Naive thymus-derived CD4-positive, alpha-beta T cell (primary cell): ENCODE measurements at regions of chr7 and their contacts with region 1.

Region 1: GRCh38 chr7:44847508-44847920 is 373 bp downstream of the H2AZ2 start:
- DNase-seq: peak in 8 of 9 donors; percentile 84 to 94 (median 91)
- ATAC-seq: peak; percentile 68
- H3K4me3 ChIP-seq: peak overlapping the region; percentile 91
- H3K4me3 Mint-ChIP-seq: peak overlapping the region; percentile 89 to 99 (median 94)
- H3K27ac ChIP-seq: peak overlapping the region; percentile 96
- H3K27ac Mint-ChIP-seq: peak overlapping the region; percentile 95 to 100 (median 98)
- H3K4me1 ChIP-seq: peaks cover 0 to 11% of the 10 kb centered on the region in 2 donors
- H3K4me1 Mint-ChIP-seq: peaks cover 21 to 58% (median 33%) of the 10 kb centered on the region in 7 donors
- H3K27me3 ChIP-seq: no peaks in the 10 kb centered on the region
- H3K27me3 Mint-ChIP-seq: peaks cover 0 to 2% (median 0%) of the 10 kb centered on the region in 5 donors

Region 2: GRCh38 chr7:44123190-44124003 is 724.1 kb before region 1 on chr7 and contains the start of gene POLD2:
- CTCF ChIA-PET with region 1: no interaction called
- POLR2A ChIA-PET with region 1: no interaction called
- intact Hi-C with region 1: loop called in 1 of 2 experiments (anchors 1 kb)
- DNase-seq: peak; percentile 88 to 99 (median 94)
- ATAC-seq: peak; percentile 99
- H3K4me3 ChIP-seq: peak within 1 kb of the TSS; percentile 89
- H3K4me3 Mint-ChIP-seq: peak within 1 kb of the TSS; percentile 82 to 97 (median 93)
- H3K27ac ChIP-seq: peak within 1 kb of the TSS; percentile 74
- H3K27ac Mint-ChIP-seq: peak within 1 kb of the TSS; percentile 40 to 96 (median 87)
- H3K4me1 ChIP-seq: peaks cover 8 to 9% of the 10 kb centered on the region in 2 donors
- H3K4me1 Mint-ChIP-seq: peaks cover 18 to 40% (median 39%) of the 10 kb centered on the region in 7 donors
- H3K27me3 ChIP-seq: no peaks in the 10 kb centered on the region
- H3K27me3 Mint-ChIP-seq: peaks cover 0 to 23% (median 0%) of the 10 kb centered on the region in 5 donors
- total RNA-seq, gene POLD2: 55.1 to 118 (median 69.2) TPM

Region 3: DNA sequence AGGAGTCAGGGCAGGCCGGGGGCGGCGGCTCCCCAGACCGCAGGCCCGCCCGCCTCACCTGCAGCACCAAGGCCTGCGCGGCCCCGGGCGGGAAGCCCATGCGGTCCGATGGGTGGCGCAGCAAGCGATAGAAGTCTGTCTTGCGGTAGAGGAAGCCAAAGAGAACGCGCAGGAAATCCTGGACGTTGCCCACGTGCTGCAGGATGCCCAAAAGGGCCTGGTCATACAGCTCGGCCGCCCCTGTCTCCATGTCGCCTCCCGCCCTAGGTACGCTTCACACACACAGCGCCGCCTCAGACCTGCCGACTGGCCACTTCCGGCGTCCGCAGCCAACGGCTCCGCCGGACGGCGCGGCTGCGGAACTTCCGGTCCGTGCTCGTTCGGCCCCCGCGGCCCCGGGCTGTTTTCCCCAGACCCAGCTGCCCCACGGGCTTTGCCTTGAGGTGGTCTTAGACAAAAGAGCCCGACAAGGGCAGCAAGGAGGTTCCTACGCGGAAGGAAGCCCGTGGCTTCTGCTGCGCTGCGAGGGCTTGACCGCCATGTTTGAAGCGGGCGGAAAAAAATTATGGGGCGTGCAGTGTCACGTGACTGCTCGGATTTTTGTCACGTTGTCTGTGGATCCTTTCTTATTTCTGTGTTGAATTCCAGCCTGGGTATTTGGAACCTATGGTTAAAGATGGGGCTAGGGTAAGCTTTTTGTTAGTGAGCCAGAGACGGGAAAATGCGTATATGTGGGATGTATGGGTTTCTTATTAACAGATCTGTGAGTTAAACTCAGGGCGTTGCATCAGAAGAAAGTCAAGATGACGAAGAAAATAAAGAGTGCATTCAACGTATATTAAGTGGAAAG is 356.9 kb before region 1 on chr7 and contains the start of gene NUDCD3:
- CTCF ChIA-PET with region 1: no interaction called
- POLR2A ChIA-PET with region 1: interaction called, 8 read pairs
- intact Hi-C with region 1: loop called (anchors 1 to 5 kb)
- DNase-seq: peak; percentile 63 to 88 (median 84)
- ATAC-seq: peak; percentile 84
- H3K4me3 ChIP-seq: peak within 1 kb of the TSS; percentile 92
- H3K4me3 Mint-ChIP-seq: peak within 1 kb of the TSS; percentile 85 to 96 (median 90)
- H3K27ac ChIP-seq: peak within 1 kb of the TSS; percentile 98
- H3K27ac Mint-ChIP-seq: peak within 1 kb of the TSS; percentile 90 to 97 (median 93)
- H3K4me1 ChIP-seq: peaks cover 28 to 30% of the 10 kb centered on the region in 2 donors
- H3K4me1 Mint-ChIP-seq: peaks cover 36 to 53% (median 48%) of the 10 kb centered on the region in 7 donors
- H3K27me3 ChIP-seq: peaks cover 0 to 3% of the 10 kb centered on the region in 2 donors
- H3K27me3 Mint-ChIP-seq: peaks cover 0 to 11% (median 3%) of the 10 kb centered on the region in 5 donors
- total RNA-seq, gene NUDCD3: 79.4 to 117 (median 91.0) TPM

Region 4: GRCh38 chr7:44606450-44607254 is 240.9 kb before region 1 on chr7 and contains the start of gene OGDH:
- CTCF ChIA-PET with region 1: interaction called, 3 read pairs
- POLR2A ChIA-PET with region 1: interaction called, 36 read pairs
- intact Hi-C with region 1: loop called (anchors 1 kb)
- DNase-seq: peak; percentile 99 to 100 (median 100)
- ATAC-seq: peak; percentile 95
- H3K4me3 ChIP-seq: peak within 1 kb of the TSS; percentile 71
- H3K4me3 Mint-ChIP-seq: peak within 1 kb of the TSS; percentile 81 to 99 (median 98)
- H3K27ac ChIP-seq: peak within 1 kb of the TSS; percentile 93
- H3K27ac Mint-ChIP-seq: peak within 1 kb of the TSS; percentile 93 to 100 (median 98)
- H3K4me1 ChIP-seq: peaks cover 13 to 17% of the 10 kb centered on the region in 2 donors
- H3K4me1 Mint-ChIP-seq: peaks cover 0 to 45% (median 37%) of the 10 kb centered on the region in 7 donors
- H3K27me3 ChIP-seq: no peaks in the 10 kb centered on the region
- H3K27me3 Mint-ChIP-seq: peaks cover 0 to 20% (median 0%) of the 10 kb centered on the region in 5 donors
- total RNA-seq, gene OGDH: 43.1 to 122 (median 66.3) TPM

Region 5: DNA sequence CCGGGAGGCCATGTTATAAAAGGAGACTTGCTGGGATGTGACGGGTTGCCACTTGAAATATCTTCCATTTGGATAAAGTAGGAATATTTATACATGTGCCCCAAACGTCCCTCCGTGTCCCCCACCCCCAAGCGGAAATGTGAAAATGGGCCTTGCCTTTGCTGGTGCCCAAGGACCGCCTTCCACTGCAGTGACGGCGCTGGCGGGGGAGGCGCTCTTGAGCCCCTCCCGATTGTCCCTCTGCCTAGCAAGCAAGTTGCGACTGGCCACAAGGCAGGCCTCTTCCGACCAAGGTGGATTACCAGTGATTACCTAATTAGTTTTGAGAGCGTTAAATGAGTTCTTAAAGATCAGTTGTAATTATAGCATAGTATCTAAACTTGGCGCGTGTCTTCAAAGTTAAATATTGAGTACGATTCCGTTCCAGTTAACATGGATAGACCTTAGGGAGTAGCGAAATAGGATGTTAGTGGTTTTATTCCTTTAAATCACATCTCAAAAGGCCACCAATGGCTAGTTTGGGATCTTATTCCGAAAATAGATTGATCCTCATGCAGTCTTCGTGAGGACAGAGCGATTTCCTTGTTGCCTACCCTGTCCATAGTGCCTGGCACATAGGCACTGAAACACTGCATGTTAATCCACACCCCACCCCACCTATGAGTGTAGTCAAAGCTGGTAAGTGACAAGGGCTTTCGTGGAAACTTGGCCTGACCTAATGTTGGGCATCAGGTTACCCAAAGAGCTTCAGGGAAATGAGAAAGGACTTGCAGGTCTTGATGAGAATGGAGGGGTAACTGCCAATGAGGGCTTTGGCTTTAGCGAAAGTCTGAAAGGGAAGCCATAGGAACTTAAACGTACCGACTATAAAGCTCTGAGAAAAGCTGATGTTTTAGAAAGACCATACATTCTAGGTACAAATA is 49.9 kb before region 1 on chr7:
- CTCF ChIA-PET with region 1: interaction called, 5 read pairs
- POLR2A ChIA-PET with region 1: interaction called, 43 read pairs
- intact Hi-C with region 1: loop called (anchors 1 kb)
- DNase-seq: peak; percentile 65 to 86 (median 80)
- ATAC-seq: peak; percentile 67
- H3K4me3 ChIP-seq: peak overlapping the region; percentile 87
- H3K4me3 Mint-ChIP-seq: peak overlapping the region; percentile 87 to 99 (median 98)
- H3K27ac ChIP-seq: peak overlapping the region; percentile 98
- H3K27ac Mint-ChIP-seq: peak overlapping the region; percentile 90 to 99 (median 97)
- H3K4me1 ChIP-seq: peaks cover 12 to 21% of the 10 kb centered on the region in 2 donors
- H3K4me1 Mint-ChIP-seq: peaks cover 8 to 41% (median 38%) of the 10 kb centered on the region in 7 donors
- H3K27me3 ChIP-seq: no peaks in the 10 kb centered on the region
- H3K27me3 Mint-ChIP-seq: no peaks in the 10 kb centered on the region

Region 6: DNA sequence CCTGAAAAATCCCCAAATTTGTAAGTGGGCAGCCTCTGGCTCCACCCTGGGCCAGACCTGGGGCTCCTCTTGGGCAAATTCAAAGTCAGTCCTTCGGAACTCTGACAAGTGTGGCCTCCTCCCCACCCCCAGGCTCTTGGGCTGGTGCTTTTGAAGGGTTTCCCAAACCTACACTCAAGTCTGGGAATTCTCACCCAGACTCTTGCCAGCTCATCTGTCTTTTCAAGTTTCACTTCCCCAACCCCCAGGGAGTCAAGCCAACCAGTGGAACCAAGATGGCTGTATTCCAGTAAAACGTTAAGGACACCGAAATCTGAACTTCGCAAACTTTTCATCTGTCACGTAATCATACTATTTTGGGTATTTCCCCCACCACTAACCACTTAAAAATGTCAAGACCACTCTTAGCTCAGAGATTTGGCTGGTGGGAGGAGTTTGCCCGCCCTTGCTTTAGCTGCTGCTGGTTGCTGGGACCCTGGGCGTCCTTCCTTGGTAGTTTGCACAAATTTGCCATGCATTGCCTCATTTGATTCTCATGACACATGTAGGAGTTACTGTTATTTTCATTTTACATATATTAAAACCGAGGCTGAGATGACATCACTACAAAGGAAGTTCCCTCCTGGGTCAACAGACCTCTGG is 133.0 kb after region 1 on chr7:
- CTCF ChIA-PET with region 1: interaction called, 3 read pairs
- POLR2A ChIA-PET with region 1: interaction called, 5 read pairs
- intact Hi-C with region 1: loop called (anchors 1 to 5 kb)
- DNase-seq: peak in 2 of 9 donors; percentile 63 to 69
- ATAC-seq: peak; percentile 38
- H3K4me3 ChIP-seq: peak overlapping the region; percentile 78
- H3K4me3 Mint-ChIP-seq: peak overlapping the region; percentile 39 to 100 (median 70)
- H3K27ac ChIP-seq: peak overlapping the region; percentile 83
- H3K27ac Mint-ChIP-seq: peak overlapping the region; percentile 85 to 99 (median 96)
- H3K4me1 ChIP-seq: peaks cover 60 to 63% of the 10 kb centered on the region in 2 donors
- H3K4me1 Mint-ChIP-seq: peaks cover 54 to 96% (median 68%) of the 10 kb centered on the region in 7 donors
- H3K27me3 ChIP-seq: no peaks in the 10 kb centered on the region
- H3K27me3 Mint-ChIP-seq: no peaks in the 10 kb centered on the region

Region 7: DNA sequence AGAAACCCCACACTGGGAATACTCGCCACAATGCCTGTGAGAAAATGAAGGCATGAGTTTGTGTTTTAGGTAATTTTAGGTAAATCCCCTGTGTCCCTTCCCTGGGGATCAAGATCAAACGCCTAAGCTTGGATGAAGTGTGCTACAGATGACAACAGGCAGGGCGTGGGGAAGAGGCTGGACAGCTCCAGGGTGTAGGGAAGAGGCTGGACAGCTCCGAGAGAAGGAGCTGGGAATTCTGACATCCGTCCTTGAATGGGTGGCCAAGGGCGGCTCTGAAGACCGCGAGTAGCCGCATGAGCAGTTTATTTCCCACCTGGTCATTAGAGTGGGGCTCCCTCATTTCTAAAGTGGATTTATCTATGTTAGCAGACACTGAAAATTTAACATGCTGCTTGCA is 419.8 kb after region 1 on chr7:
- CTCF ChIA-PET with region 1: no interaction called
- POLR2A ChIA-PET with region 1: no interaction called
- intact Hi-C with region 1: no loop called
- DNase-seq: no peak
- ATAC-seq: no peak
- H3K4me3 ChIP-seq: no peak overlapping the region
- H3K4me3 Mint-ChIP-seq: no peak overlapping the region
- H3K27ac ChIP-seq: no peak overlapping the region
- H3K27ac Mint-ChIP-seq: no peak overlapping the region
- H3K4me1 ChIP-seq: no peaks in the 10 kb centered on the region
- H3K4me1 Mint-ChIP-seq: no peaks in the 10 kb centered on the region
- H3K27me3 ChIP-seq: no peaks in the 10 kb centered on the region
- H3K27me3 Mint-ChIP-seq: peaks cover 20 to 30% (median 26%) of the 10 kb centered on the region in 5 donors

Region 8: DNA sequence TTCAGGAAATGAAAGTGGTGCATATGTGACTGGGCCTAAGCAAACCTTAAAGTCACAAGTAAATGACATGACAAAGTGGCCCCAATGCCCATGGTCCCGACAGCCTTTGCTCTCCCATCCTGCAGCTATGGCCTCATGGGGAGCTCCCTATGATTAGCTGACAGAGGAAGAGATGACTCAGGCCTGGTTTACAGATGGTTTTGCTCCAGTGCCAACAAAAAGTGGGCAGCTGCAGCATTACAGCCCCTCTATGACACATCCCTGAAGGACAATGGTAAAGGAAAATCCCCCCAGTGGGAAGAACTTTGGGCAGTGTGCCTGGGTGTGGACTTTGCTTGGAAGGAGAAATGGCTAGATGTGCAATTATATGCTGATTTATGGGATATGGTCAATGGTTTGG is 621.6 kb after region 1 on chr7:
- CTCF ChIA-PET with region 1: no interaction called
- POLR2A ChIA-PET with region 1: no interaction called
- intact Hi-C with region 1: no loop called
- DNase-seq: no peak
- ATAC-seq: no peak
- H3K4me3 ChIP-seq: no peak overlapping the region
- H3K4me3 Mint-ChIP-seq: no peak overlapping the region
- H3K27ac ChIP-seq: no peak overlapping the region
- H3K27ac Mint-ChIP-seq: no peak overlapping the region
- H3K4me1 ChIP-seq: no peaks in the 10 kb centered on the region
- H3K4me1 Mint-ChIP-seq: peaks cover 0 to 2% (median 0%) of the 10 kb centered on the region in 7 donors
- H3K27me3 ChIP-seq: peaks cover 0 to 4% of the 10 kb centered on the region in 2 donors
- H3K27me3 Mint-ChIP-seq: peaks cover 10 to 44% (median 26%) of the 10 kb centered on the region in 5 donors